Mammary epithelial cell (primary cell): ENCODE measurements at regions of chr13 and their contacts with region 1.

Region 1: GRCh38 chr13:23600534-23600933 is 30.3 kb downstream of the TNFRSF19 start:
- DNase-seq: no peak
- H3K4me3 ChIP-seq: no peak overlapping the region
- H3K27ac ChIP-seq: no peak overlapping the region
- H3K4me1 ChIP-seq: no peaks in the 10 kb centered on the region
- H3K27me3 ChIP-seq: no peaks in the 10 kb centered on the region
- CTCF ChIP-seq: no peak

Region 2: DNA sequence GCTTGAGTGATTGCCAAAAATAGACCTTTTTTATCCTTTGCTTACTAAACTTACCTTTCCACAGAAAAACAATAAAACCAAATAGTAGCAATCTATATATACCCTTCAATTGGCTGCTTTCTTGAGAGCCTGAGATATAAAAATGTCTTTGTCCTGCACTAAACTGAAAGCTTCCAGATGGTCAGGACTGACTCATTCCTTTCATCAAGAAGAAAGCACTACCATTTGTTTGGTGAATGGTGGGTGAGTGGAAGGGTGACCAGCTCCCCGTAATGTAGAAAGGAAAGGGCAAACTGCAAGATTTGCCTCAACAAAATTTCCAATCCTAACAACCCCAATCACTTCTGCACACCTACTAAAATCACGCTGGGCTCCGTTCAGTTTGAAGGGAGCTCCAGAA is 234.9 kb before region 1 on chr13:
- CTCF ChIA-PET with region 1: no interaction called
- dilution Hi-C with region 1: no loop called
- in situ Hi-C with region 1: no loop called
- intact Hi-C with region 1: no loop called
- DNase-seq: no peak
- H3K4me3 ChIP-seq: no peak overlapping the region
- H3K27ac ChIP-seq: no peak overlapping the region
- H3K4me1 ChIP-seq: no peaks in the 10 kb centered on the region
- H3K27me3 ChIP-seq: no peaks in the 10 kb centered on the region
- CTCF ChIP-seq: no peak

Region 3: GRCh38 chr13:23558675-23559536 is 41.6 kb before region 1 on chr13:
- CTCF ChIA-PET with region 1: no interaction called
- dilution Hi-C with region 1: no loop called
- in situ Hi-C with region 1: no loop called
- intact Hi-C with region 1: no loop called
- DNase-seq: peak; percentile 97
- H3K4me3 ChIP-seq: peak overlapping the region; percentile 9 to 32 (median 29)
- H3K27ac ChIP-seq: peak overlapping the region; percentile 92
- H3K4me1 ChIP-seq: peaks cover 21% of the 10 kb centered on the region
- H3K27me3 ChIP-seq: no peaks in the 10 kb centered on the region
- CTCF ChIP-seq: no peak

Region 4: GRCh38 chr13:23579072-23579895 is 21.2 kb before region 1 on chr13:
- CTCF ChIA-PET with region 1: no interaction called
- dilution Hi-C with region 1: no loop called
- in situ Hi-C with region 1: no loop called
- intact Hi-C with region 1: no loop called
- DNase-seq: peak; percentile 82
- H3K4me3 ChIP-seq: peak overlapping the region; percentile 65 to 97 (median 68)
- H3K27ac ChIP-seq: peak overlapping the region; percentile 39
- H3K4me1 ChIP-seq: peaks cover 8% of the 10 kb centered on the region
- H3K27me3 ChIP-seq: peaks cover 10% of the 10 kb centered on the region
- CTCF ChIP-seq: no peak

Region 5: GRCh38 chr13:23639674-23640073 is 39.1 kb after region 1 on chr13:
- CTCF ChIA-PET with region 1: no interaction called
- dilution Hi-C with region 1: no loop called
- in situ Hi-C with region 1: no loop called
- intact Hi-C with region 1: loop called (anchors 5 kb)
- DNase-seq: peak; percentile 36
- H3K4me3 ChIP-seq: no peak overlapping the region
- H3K27ac ChIP-seq: no peak overlapping the region
- H3K4me1 ChIP-seq: no peaks in the 10 kb centered on the region
- H3K27me3 ChIP-seq: no peaks in the 10 kb centered on the region
- CTCF ChIP-seq: no peak